CD8-positive, alpha-beta T cell (primary cell): ENCODE measurements at regions of chr3 and their contacts with region 1.

Region 1: GRCh38 chr3:172106989-172107388 is 67.6 kb downstream of the FNDC3B start:
- DNase-seq: peak; percentile 35 to 93 (median 59)
- ATAC-seq: peak; percentile 56
- H3K4me3 ChIP-seq: peak overlapping the region; percentile 25 to 28
- H3K4me3 Mint-ChIP-seq: peak overlapping the region; percentile 70
- H3K27ac ChIP-seq: peak overlapping the region; percentile 41 to 72
- H3K27ac Mint-ChIP-seq: peak overlapping the region; percentile 85
- H3K4me1 ChIP-seq: peaks cover 74% of the 10 kb centered on the region
- H3K4me1 Mint-ChIP-seq: peaks cover 81% of the 10 kb centered on the region
- H3K27me3 ChIP-seq: no peaks in the 10 kb centered on the region
- H3K27me3 Mint-ChIP-seq: no peaks in the 10 kb centered on the region
- CTCF ChIP-seq: no peak

Region 2: DNA sequence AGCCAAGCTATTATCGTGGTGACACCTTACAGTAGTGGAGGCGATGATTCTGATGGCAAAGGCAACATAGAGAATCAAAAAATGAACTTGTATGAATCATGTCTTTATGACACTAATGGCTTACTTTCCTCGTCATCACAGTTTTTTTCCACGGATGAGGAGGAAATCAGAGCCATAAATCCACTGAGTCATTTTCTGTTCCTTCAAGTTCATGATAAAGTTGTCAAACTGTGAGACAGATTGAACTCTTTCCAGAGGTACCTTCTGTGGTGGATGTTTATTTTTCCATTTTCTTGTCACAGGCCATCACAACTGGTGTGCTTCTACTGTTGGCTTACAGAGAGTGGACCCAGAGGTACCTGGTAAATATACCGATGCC is 255.3 kb before region 1 on chr3:
- CTCF ChIA-PET with region 1: no interaction called
- POLR2A ChIA-PET with region 1: no interaction called
- intact Hi-C with region 1: no loop called
- DNase-seq: no peak
- ATAC-seq: no peak
- H3K4me3 ChIP-seq: no peak overlapping the region
- H3K4me3 Mint-ChIP-seq: no peak overlapping the region
- H3K27ac ChIP-seq: no peak overlapping the region
- H3K27ac Mint-ChIP-seq: no peak overlapping the region
- H3K4me1 ChIP-seq: no peaks in the 10 kb centered on the region
- H3K4me1 Mint-ChIP-seq: peaks cover 1% of the 10 kb centered on the region
- H3K27me3 ChIP-seq: no peaks in the 10 kb centered on the region
- H3K27me3 Mint-ChIP-seq: peaks cover 7% of the 10 kb centered on the region
- CTCF ChIP-seq: no peak

Region 3: GRCh38 chr3:171867981-171868380 is 239.0 kb before region 1 on chr3:
- CTCF ChIA-PET with region 1: no interaction called
- POLR2A ChIA-PET with region 1: no interaction called
- intact Hi-C with region 1: no loop called
- DNase-seq: peak in 1 of 9 experiments; percentile 3
- ATAC-seq: no peak
- H3K4me3 ChIP-seq: no peak overlapping the region
- H3K4me3 Mint-ChIP-seq: no peak overlapping the region
- H3K27ac ChIP-seq: no peak overlapping the region
- H3K27ac Mint-ChIP-seq: no peak overlapping the region
- H3K4me1 ChIP-seq: no peaks in the 10 kb centered on the region
- H3K4me1 Mint-ChIP-seq: no peaks in the 10 kb centered on the region
- H3K27me3 ChIP-seq: no peaks in the 10 kb centered on the region
- H3K27me3 Mint-ChIP-seq: no peaks in the 10 kb centered on the region
- CTCF ChIP-seq: no peak

Region 4: GRCh38 chr3:172092658-172093057 is 14.3 kb before region 1 on chr3:
- CTCF ChIA-PET with region 1: interaction called, 3 read pairs
- POLR2A ChIA-PET with region 1: interaction called, 8 read pairs
- intact Hi-C with region 1: loop called in 1 of 2 experiments (anchors 2 kb)
- DNase-seq: no peak
- ATAC-seq: no peak
- H3K4me3 ChIP-seq: no peak overlapping the region
- H3K4me3 Mint-ChIP-seq: no peak overlapping the region
- H3K27ac ChIP-seq: no peak overlapping the region
- H3K27ac Mint-ChIP-seq: no peak overlapping the region
- H3K4me1 ChIP-seq: peaks cover 17% of the 10 kb centered on the region
- H3K4me1 Mint-ChIP-seq: peaks cover 32% of the 10 kb centered on the region
- H3K27me3 ChIP-seq: no peaks in the 10 kb centered on the region
- H3K27me3 Mint-ChIP-seq: no peaks in the 10 kb centered on the region
- CTCF ChIP-seq: no peak